CD8-positive, alpha-beta T cell (primary cell): ENCODE measurements at regions of chr4 and their contacts with region 1.

Region 1: DNA sequence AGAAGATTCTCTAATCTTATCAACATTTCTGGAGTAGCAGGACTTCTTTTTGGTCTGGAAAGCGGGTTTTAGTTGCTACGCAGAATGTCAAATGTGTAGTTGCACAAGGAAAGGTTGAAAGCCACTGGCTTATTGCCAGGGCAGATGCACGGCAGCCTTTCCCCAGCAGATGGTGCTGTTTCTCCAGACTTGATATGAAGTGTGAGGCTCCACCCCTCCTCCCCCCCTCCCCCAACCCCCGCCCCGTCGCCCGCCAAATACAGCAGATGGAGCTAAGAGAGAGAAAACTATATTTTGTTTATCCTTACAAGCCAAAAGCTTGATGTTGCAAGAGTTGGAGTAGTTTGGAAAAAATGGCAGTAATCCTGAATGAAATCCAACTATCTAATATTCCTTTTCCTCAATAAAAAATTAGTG is 32.0 kb downstream of the ENOPH1 start:
- DNase-seq: peak; percentile 68 to 88 (median 84)
- ATAC-seq: peak; percentile 98
- H3K4me3 ChIP-seq: no peak overlapping the region
- H3K4me3 Mint-ChIP-seq: no peak overlapping the region
- H3K27ac ChIP-seq: no peak overlapping the region
- H3K27ac Mint-ChIP-seq: peak overlapping the region; percentile 20
- H3K4me1 ChIP-seq: peaks cover 3% of the 10 kb centered on the region
- H3K4me1 Mint-ChIP-seq: peaks cover 3% of the 10 kb centered on the region
- H3K27me3 ChIP-seq: no peaks in the 10 kb centered on the region
- H3K27me3 Mint-ChIP-seq: no peaks in the 10 kb centered on the region
- CTCF ChIP-seq: peak; percentile 79

Region 2: DNA sequence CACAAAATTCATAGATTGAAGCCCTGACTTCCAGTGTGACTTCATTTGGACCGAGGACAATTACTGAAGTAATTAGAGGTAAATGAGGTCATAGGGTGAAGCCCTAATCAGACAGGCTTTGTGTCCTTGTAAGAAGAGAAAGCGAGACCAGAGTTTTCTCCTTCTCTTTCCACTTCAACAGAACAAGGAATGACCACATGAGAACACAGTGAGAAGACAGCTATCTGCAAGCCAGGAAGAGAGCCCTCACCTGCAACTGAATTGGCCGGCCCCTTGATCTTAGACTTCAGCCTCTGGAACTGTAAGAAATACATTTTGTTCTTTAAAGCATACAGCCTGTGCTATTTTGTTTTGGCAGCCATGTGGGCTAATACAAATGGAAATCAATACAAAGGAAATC is 1180.3 kb before region 1 on chr4:
- CTCF ChIA-PET with region 1: no interaction called
- POLR2A ChIA-PET with region 1: no interaction called
- intact Hi-C with region 1: no loop called
- DNase-seq: no peak
- ATAC-seq: no peak
- H3K4me3 ChIP-seq: no peak overlapping the region
- H3K4me3 Mint-ChIP-seq: no peak overlapping the region
- H3K27ac ChIP-seq: no peak overlapping the region
- H3K27ac Mint-ChIP-seq: no peak overlapping the region
- H3K4me1 ChIP-seq: no peaks in the 10 kb centered on the region
- H3K4me1 Mint-ChIP-seq: no peaks in the 10 kb centered on the region
- H3K27me3 ChIP-seq: no peaks in the 10 kb centered on the region
- H3K27me3 Mint-ChIP-seq: peaks cover 2% of the 10 kb centered on the region
- CTCF ChIP-seq: no peak

Region 3: GRCh38 chr4:82352913-82353366 is 109.5 kb before region 1 on chr4:
- CTCF ChIA-PET with region 1: no interaction called
- POLR2A ChIA-PET with region 1: no interaction called
- intact Hi-C with region 1: no loop called
- DNase-seq: no peak
- ATAC-seq: no peak
- H3K4me3 ChIP-seq: no peak overlapping the region
- H3K4me3 Mint-ChIP-seq: no peak overlapping the region
- H3K27ac ChIP-seq: no peak overlapping the region
- H3K27ac Mint-ChIP-seq: peak overlapping the region; percentile 60
- H3K4me1 ChIP-seq: peaks cover 24% of the 10 kb centered on the region
- H3K4me1 Mint-ChIP-seq: peaks cover 62% of the 10 kb centered on the region
- H3K27me3 ChIP-seq: no peaks in the 10 kb centered on the region
- H3K27me3 Mint-ChIP-seq: no peaks in the 10 kb centered on the region
- CTCF ChIP-seq: no peak

Region 4: GRCh38 chr4:82500106-82500965 is 37.9 kb after region 1 on chr4:
- CTCF ChIA-PET with region 1: no interaction called
- POLR2A ChIA-PET with region 1: no interaction called
- intact Hi-C with region 1: no loop called
- DNase-seq: no peak
- ATAC-seq: no peak
- H3K4me3 ChIP-seq: no peak overlapping the region
- H3K4me3 Mint-ChIP-seq: no peak overlapping the region
- H3K27ac ChIP-seq: no peak overlapping the region
- H3K27ac Mint-ChIP-seq: no peak overlapping the region
- H3K4me1 ChIP-seq: no peaks in the 10 kb centered on the region
- H3K4me1 Mint-ChIP-seq: no peaks in the 10 kb centered on the region
- H3K27me3 ChIP-seq: no peaks in the 10 kb centered on the region
- H3K27me3 Mint-ChIP-seq: no peaks in the 10 kb centered on the region
- CTCF ChIP-seq: no peak

Region 5: DNA sequence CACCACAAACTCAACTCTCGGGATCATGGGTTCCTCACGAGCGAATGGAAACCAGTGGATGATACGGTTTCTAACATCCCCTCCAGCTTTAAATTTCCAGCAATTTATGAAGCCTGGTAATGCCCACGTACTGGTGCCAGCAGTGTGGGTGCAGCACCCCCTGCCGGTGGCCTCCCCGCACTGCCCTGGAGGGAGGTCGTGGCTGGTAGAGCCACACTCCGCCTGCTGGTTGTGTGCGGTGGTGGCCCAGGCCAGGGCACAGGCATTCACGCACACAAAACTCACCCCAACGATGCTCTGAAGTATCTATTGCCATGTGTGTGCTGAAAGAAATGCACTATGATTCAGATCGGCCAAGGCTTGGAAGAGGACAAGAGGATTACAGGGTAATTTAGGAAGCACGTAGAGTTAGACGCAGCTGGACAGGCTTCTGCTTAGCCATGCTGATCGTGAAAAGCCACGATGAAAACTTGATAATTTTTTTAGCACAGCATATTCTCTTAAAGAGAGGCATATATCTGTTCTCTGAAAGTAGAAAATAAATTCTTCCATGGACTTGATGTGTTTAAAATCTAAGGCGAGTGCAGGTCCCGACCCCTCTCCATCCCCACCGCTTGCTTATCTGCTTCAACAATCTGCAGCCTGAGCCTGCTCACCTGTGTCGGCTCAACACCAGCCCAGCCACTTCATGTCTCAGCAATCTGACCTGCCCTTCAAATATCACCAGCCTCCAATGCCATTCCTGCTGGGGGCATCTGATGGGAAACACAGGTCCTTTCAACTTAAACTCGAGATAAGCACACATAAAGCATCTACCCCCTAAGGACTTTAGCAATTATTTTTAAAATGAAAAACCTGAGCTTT is 277.1 kb after region 1 on chr4:
- CTCF ChIA-PET with region 1: no interaction called
- POLR2A ChIA-PET with region 1: no interaction called
- intact Hi-C with region 1: loop called in 1 of 2 experiments (anchors 5 kb)
- DNase-seq: peak; percentile 5 to 61 (median 45)
- ATAC-seq: peak; percentile 78
- H3K4me3 ChIP-seq: no peak overlapping the region
- H3K4me3 Mint-ChIP-seq: no peak overlapping the region
- H3K27ac ChIP-seq: no peak overlapping the region
- H3K27ac Mint-ChIP-seq: no peak overlapping the region
- H3K4me1 ChIP-seq: no peaks in the 10 kb centered on the region
- H3K4me1 Mint-ChIP-seq: no peaks in the 10 kb centered on the region
- H3K27me3 ChIP-seq: no peaks in the 10 kb centered on the region
- H3K27me3 Mint-ChIP-seq: peaks cover under 1% of the 10 kb centered on the region
- CTCF ChIP-seq: peak; percentile 45

Region 6: GRCh38 chr4:82851885-82852750 is 389.7 kb after region 1 on chr4:
- CTCF ChIA-PET with region 1: no interaction called
- POLR2A ChIA-PET with region 1: no interaction called
- intact Hi-C with region 1: loop called (anchors 5 to 10 kb)
- DNase-seq: peak in 2 of 9 experiments; percentile 46 to 60
- ATAC-seq: peak; percentile 54
- H3K4me3 ChIP-seq: no peak overlapping the region
- H3K4me3 Mint-ChIP-seq: no peak overlapping the region
- H3K27ac ChIP-seq: no peak overlapping the region
- H3K27ac Mint-ChIP-seq: no peak overlapping the region
- H3K4me1 ChIP-seq: no peaks in the 10 kb centered on the region
- H3K4me1 Mint-ChIP-seq: no peaks in the 10 kb centered on the region
- H3K27me3 ChIP-seq: no peaks in the 10 kb centered on the region
- H3K27me3 Mint-ChIP-seq: no peaks in the 10 kb centered on the region
- CTCF ChIP-seq: peak; percentile 65

Region 7: GRCh38 chr4:83043801-83044407 is 581.5 kb after region 1 on chr4:
- CTCF ChIA-PET with region 1: no interaction called
- POLR2A ChIA-PET with region 1: no interaction called
- intact Hi-C with region 1: loop called in 1 of 2 experiments (anchors 10 kb)
- DNase-seq: no peak
- ATAC-seq: no peak
- H3K4me3 ChIP-seq: no peak overlapping the region
- H3K4me3 Mint-ChIP-seq: no peak overlapping the region
- H3K27ac ChIP-seq: no peak overlapping the region
- H3K27ac Mint-ChIP-seq: no peak overlapping the region
- H3K4me1 ChIP-seq: no peaks in the 10 kb centered on the region
- H3K4me1 Mint-ChIP-seq: peaks cover 36% of the 10 kb centered on the region
- H3K27me3 ChIP-seq: no peaks in the 10 kb centered on the region
- H3K27me3 Mint-ChIP-seq: no peaks in the 10 kb centered on the region
- CTCF ChIP-seq: no peak